ENCODE measurements at regions of chr11 and their contacts with region 1.

Region 1: GRCh38 chr11:41237382-41237781 is 222.1 kb downstream of the LRRC4C start:
- DNase-seq: no peak
- H3K4me3 ChIP-seq: no peak overlapping the region
- CTCF ChIP-seq: no peak

Region 2: DNA sequence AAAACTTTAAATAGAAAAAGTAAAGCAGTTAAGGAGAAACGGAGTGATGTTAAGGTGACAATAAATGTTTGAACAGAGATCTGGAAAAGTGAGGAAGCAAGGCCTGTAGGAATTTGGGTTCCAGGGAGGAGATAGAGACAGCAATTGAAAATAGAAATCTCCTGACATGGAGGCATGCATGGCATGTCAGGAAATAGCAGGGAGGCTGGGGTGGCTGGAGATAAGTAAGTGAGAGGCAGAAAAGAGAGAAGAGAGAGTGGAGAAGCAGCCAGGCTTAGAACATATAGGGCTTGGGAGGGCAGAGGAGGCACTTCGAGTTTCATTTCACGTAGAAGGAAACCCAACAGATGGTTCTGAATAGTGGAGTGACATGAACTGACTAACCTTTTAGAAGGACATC is 36.5 kb after region 1 on chr11:
- in situ Hi-C with region 1: loop called (anchors 5 kb)
- DNase-seq: no peak
- H3K4me3 ChIP-seq: no peak overlapping the region
- CTCF ChIP-seq: no peak

Region 3: GRCh38 chr11:41284354-41284753 is 47.0 kb after region 1 on chr11:
- in situ Hi-C with region 1: no loop called
- DNase-seq: no peak
- H3K4me3 ChIP-seq: no peak overlapping the region
- CTCF ChIP-seq: no peak

Measured in astrocyte of the cerebellum (primary cell).